PC-3 (cell line): ENCODE measurements at regions of chr6 and their contacts with region 1.

Region 1: DNA sequence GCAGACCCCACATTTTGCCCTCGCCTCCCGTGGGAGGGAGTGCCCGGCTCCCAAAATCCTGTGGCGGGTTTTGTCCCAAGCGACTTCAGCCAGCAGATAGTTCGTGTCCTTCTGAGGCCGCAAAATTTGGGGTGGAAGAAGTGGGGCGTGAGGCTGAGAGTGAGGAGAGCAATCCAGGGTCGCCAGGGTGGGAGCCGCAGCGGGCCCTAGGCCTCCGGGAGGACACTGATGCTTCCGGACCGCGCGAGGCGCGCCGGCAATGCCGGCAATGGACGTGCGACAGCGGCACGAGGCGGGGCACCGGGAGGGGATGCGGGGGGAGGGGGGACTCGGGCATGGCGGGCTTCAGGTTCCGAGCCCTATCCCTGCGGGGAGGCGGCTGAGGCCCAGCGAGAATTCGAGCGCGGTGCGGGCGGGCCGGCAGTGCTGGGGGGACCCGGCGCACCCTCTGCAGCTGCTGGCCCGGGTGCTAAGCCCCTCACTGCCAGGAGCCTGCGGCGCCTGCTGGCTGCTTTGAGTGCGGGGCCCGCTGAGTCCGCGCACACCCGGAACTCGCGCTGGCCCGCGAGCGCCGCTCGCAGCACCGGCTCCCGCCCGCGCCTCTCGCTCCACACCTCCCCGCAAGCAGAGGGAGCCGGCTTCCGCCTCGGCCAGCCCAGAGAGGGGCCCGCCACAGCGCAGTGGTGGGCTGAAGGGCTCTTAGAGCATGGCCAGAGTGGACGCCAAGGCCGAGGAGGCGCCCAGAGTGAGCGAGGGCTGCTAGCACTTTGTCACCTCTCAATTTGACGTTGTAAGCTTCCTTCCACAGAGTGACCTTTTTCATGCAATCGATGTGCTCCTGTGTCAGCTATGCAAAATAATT is 143.8 kb downstream of the LPA start:
- DNase-seq: peak; percentile 33
- ATAC-seq: peak; percentile 72
- H3K4me3 ChIP-seq: peak overlapping the region; percentile 79
- H3K27ac ChIP-seq: peak overlapping the region; percentile 41; the same call in 1 of the 2 replicates
- H3K4me1 ChIP-seq: peaks cover 10% of the 10 kb centered on the region; the same call in 1 of the 2 replicates
- H3K27me3 ChIP-seq: no peaks in the 10 kb centered on the region
- CTCF ChIP-seq: peak; percentile 21; the same call in 1 of the 2 replicates

Region 2: DNA sequence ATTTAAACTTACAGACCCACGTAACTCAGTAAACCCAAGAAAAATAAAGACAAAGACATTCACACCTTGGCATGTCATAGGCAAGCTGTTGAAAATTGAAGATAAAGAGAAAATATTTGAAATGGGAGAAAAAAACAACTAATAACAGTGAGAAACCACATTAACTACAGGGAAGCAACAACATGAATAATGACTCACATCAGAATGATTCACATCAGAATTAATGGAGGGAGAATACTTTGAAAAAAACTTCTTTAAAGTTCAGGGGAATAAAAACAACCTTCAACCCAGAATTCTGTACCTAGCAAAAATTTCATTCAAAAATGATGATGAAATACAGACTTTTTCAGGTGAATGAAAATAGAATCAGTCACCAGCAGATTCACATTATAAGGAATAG is 205.0 kb before region 1 on chr6:
- CTCF ChIA-PET with region 1: no interaction called
- POLR2A ChIA-PET with region 1: no interaction called
- intact Hi-C with region 1: no loop called
- DNase-seq: peak; percentile 35
- ATAC-seq: no peak
- H3K4me3 ChIP-seq: no peak overlapping the region
- H3K27ac ChIP-seq: no peak overlapping the region
- H3K4me1 ChIP-seq: no peaks in the 10 kb centered on the region
- H3K27me3 ChIP-seq: no peaks in the 10 kb centered on the region
- CTCF ChIP-seq: no peak

Region 3: DNA sequence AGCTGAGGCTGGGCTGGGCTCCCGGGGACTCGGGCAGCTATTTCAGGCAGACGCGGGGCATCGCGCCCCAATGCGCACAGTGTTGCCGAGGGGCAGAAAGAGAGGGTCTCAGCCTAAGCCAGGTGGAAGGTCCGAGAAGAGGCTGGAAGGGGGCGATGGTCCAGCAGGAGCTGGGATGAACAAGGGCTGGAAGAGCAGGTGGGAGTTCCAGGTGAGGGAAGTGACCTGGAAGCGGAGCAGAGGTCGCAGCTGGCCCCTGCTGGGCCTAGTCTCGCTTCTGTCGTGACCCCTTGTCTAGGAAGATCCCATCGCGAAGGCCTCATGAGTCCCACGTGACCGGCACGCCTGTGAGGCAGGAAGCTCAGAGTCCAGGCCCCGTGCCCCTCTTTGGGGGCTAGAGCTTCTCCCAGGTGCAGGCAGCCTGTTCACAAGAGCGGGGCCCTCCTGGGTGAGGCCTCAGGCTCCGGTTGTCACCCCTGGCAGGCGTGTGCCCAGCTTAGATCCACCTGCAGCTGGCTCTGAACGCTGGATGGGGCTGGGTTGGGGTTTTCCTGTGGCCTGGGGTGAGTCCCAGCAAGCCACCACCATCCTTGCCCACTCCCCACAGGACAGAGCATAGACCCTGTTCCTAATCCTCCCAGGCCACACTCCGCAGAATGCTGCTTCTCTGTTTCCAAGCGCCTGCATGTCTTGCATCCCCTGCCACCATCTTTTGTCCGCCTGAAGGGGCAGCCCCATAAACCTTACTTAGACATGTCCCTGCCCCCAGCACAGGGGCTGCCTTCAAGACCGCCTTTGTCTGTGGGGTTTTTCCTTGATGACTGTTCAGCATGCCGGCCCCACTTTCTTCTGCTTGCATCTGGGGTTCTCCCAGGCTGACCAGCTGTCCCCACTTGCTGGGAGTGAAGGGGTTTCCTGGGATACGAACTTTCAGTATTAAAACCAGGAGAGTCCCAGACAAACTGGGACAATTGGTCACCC is 157.0 kb before region 1 on chr6:
- CTCF ChIA-PET with region 1: no interaction called
- POLR2A ChIA-PET with region 1: no interaction called
- intact Hi-C with region 1: no loop called
- DNase-seq: no peak
- ATAC-seq: no peak
- H3K4me3 ChIP-seq: no peak overlapping the region
- H3K27ac ChIP-seq: no peak overlapping the region
- H3K4me1 ChIP-seq: peaks cover 10% of the 10 kb centered on the region
- H3K27me3 ChIP-seq: no peaks in the 10 kb centered on the region
- CTCF ChIP-seq: no peak

Region 4: GRCh38 chr6:160462551-160463109 is 57.6 kb before region 1 on chr6:
- CTCF ChIA-PET with region 1: no interaction called
- POLR2A ChIA-PET with region 1: no interaction called
- intact Hi-C with region 1: loop called (anchors 10 kb)
- DNase-seq: peak; percentile 85
- ATAC-seq: peak; percentile 89
- H3K4me3 ChIP-seq: no peak overlapping the region
- H3K27ac ChIP-seq: peak overlapping the region; percentile 94
- H3K4me1 ChIP-seq: peaks cover 28% of the 10 kb centered on the region
- H3K27me3 ChIP-seq: no peaks in the 10 kb centered on the region
- CTCF ChIP-seq: no peak

Region 5: GRCh38 chr6:160534050-160534696 is 13.9 kb after region 1 on chr6:
- CTCF ChIA-PET with region 1: interaction called, 5 read pairs
- POLR2A ChIA-PET with region 1: no interaction called
- intact Hi-C with region 1: loop called (anchors 1 kb)
- DNase-seq: peak; percentile 70
- ATAC-seq: peak; percentile 82
- H3K4me3 ChIP-seq: peak overlapping the region; percentile 68
- H3K27ac ChIP-seq: no peak overlapping the region
- H3K4me1 ChIP-seq: no peaks in the 10 kb centered on the region; the same call in 1 of the 2 replicates
- H3K27me3 ChIP-seq: 0 out of 2 replicates have a peak, but pooled peaks cover 4% of the 10 kb centered on the region
- CTCF ChIP-seq: peak; percentile 93

Region 6: DNA sequence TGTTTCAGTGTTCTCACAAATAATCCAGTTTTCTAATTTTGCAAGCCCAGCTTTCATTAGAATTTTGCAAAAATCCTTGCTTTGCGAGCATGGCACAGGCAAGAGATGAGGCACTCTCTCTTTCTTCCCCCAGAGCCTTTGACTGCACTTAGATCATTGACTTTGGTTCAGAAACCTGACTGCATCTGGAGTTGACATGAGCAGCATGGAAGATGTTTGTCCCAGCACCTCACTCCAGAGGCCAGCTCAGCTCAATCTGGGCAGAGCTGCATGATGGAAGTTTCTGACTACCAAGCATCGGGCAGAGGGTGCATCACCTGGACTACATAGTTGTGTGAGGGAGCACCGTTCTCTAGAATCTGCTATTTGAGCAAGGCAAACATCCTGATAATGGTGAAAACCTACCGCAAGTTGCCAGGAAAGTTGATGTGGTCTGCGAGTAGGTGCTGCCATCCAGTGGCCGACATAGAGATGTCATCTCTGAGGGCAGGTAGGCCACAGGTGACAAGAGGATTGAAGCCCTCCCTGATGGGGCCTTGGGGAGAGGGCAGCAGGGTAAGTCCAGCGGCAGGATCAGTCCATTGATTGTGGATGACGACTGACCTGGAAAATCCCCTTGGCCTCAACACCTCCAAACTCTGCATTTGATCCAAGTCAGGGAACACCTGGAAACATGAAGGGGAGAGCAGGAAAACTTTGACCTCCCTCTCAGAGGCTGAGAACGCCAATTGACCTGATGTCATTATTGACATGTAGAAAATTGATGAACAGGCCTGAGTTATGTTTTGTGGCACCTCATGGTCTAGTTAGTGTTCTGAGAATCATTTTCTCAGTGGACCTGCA is 147.6 kb after region 1 on chr6:
- CTCF ChIA-PET with region 1: no interaction called
- POLR2A ChIA-PET with region 1: no interaction called
- intact Hi-C with region 1: loop called (anchors 1 kb)
- DNase-seq: peak; percentile 57
- ATAC-seq: peak; percentile 57
- H3K4me3 ChIP-seq: no peak overlapping the region
- H3K27ac ChIP-seq: no peak overlapping the region
- H3K4me1 ChIP-seq: no peaks in the 10 kb centered on the region
- H3K27me3 ChIP-seq: peaks cover 25% of the 10 kb centered on the region
- CTCF ChIP-seq: peak; percentile 74